ENCODE measurements at regions of chr1 and their contacts with region 1.

Region 1: DNA sequence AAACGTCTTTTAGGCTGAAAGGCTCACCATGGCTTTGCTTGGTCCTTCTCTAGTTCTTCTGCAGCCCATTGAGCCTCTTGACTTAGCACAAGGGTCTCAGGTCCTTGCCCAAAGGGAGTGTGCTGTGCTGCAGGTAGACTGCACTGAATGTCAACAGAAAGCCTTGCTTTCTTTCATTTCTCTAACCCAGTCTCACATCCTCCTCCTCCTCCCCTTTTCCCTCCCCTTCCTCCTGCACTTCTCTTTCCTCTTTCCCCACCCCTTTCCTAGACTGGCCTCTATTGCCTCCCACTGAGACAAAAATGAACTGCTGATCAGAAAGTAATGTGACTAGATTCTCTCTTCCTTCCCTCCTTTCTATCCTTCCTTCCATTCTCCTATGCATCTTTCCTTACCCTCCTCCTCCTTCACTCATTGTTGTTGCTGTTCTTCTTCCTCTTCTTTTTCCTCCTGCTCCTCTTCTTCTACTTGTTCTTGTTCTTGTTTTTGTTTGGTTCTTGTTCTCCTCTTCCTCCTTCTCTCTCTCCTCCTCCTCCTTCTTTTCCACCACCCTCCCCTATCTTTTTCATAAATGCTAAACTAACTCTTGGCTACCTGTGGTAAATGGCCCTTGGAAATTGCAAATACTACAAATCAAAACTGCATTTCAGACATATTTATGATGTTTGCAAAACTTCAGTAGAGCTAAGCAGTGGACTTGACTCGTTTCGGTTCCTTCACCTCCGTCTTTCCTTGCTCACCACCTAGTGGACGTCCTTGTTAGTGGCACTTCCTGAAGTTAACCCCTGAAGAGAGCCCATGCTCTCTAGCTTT is at the start of gene SELL:
- DNase-seq: peak; percentile 43 to 89 (median 73)
- ATAC-seq: peak; percentile 76 to 81 (median 78)
- H3K4me3 ChIP-seq: peak within 1 kb of the TSS; percentile 59 to 76
- H3K4me3 Mint-ChIP-seq: peak within 1 kb of the TSS; percentile 88 to 98 (median 91)
- H3K27ac ChIP-seq: peak within 1 kb of the TSS; percentile 50
- H3K27ac Mint-ChIP-seq: peak within 1 kb of the TSS; percentile 99 to 100
- H3K4me1 ChIP-seq: peaks cover 4 to 16% of the 10 kb centered on the region in 2 experiments
- H3K4me1 Mint-ChIP-seq: peaks cover 19 to 35% (median 29%) of the 10 kb centered on the region in 3 donors
- H3K27me3 ChIP-seq: no peaks in the 10 kb centered on the region
- H3K27me3 Mint-ChIP-seq: peaks cover 3% of the 10 kb centered on the region in 2 donors
- total RNA-seq, gene SELL: 305 to 461 (median 336) TPM

Region 2: DNA sequence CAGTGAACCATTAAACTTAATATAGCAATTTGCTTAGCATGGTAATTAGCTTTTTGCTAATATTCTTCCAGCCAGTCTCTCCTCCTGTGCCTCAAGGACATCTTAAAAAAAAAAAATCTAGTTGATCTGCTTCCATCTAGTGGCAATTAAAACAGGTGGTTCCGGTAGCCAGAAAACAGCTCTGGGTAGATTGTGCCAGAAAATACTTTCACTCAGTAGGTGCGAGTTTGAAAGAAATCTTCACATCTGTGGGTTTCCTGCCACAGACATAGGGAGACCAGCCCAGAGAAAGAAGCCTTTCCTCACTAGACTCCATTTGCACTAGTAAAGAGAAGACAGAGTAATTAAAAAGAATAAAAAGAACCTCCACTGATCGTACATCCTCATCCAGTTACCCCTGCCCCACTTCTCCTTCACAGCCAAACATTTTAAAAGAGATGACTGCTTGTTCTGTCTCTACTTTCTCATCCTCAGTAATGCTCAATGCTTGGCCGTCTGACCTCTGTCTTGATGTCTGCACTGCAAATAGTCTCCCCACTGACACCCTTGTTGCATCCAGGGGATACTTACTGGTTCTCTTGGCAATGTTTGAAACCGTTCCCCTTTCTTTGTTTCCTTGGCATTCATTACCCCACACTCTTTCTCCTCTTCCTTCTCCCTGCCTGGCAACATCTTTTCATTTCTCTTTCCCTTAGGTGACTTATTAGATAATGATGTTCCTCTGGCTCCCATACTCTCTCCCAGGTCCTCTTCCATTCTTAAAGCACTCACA is 17.2 kb before region 1 on chr1:
- CTCF ChIA-PET with region 1: interaction called, 5 to 33 read pairs
- POLR2A ChIA-PET with region 1: interaction called, 4 to 6 read pairs
- DNase-seq: peak in 31 of 35 experiments; percentile 11 to 80 (median 50)
- ATAC-seq: peak; percentile 62 to 70 (median 64)
- H3K4me3 ChIP-seq: peak overlapping the region in 1 of 2 donors; percentile 15
- H3K4me3 Mint-ChIP-seq: peak overlapping the region; percentile 32 to 91 (median 52)
- H3K27ac ChIP-seq: peak overlapping the region; percentile 85
- H3K27ac Mint-ChIP-seq: peak overlapping the region in 1 of 2 donors; percentile 93
- H3K4me1 ChIP-seq: peaks cover 81 to 91% of the 10 kb centered on the region in 2 experiments
- H3K4me1 Mint-ChIP-seq: peaks cover 17 to 98% (median 97%) of the 10 kb centered on the region in 3 donors
- H3K27me3 ChIP-seq: no peaks in the 10 kb centered on the region
- H3K27me3 Mint-ChIP-seq: no peaks in the 10 kb centered on the region